ENCODE measurements at regions of chr3 and their contacts with region 1.

Region 1: GRCh38 chr3:32684800-32685542 is at the start of gene CNOT10:
- DNase-seq: peak; percentile 97
- H3K4me3 Mint-ChIP-seq: peak within 1 kb of the TSS; percentile 90
- H3K27ac Mint-ChIP-seq: peak within 1 kb of the TSS; percentile 86
- H3K4me1 Mint-ChIP-seq: peaks cover 32% of the 10 kb centered on the region
- H3K27me3 Mint-ChIP-seq: no peaks in the 10 kb centered on the region
- total RNA-seq, gene CNOT10: 40.6 to 46.5 TPM

Region 2: GRCh38 chr3:32106280-32106928 is 578.6 kb before region 1 on chr3 and contains the start of gene GPD1L:
- CTCF ChIA-PET with region 1: no interaction called
- intact Hi-C with region 1: loop called (anchors 1 kb)
- DNase-seq: peak; percentile 92
- H3K4me3 Mint-ChIP-seq: peak within 1 kb of the TSS; percentile 96
- H3K27ac Mint-ChIP-seq: peak within 1 kb of the TSS; percentile 46
- H3K4me1 Mint-ChIP-seq: peaks cover 30% of the 10 kb centered on the region
- H3K27me3 Mint-ChIP-seq: no peaks in the 10 kb centered on the region
- total RNA-seq, gene GPD1L: 10.8 to 12.6 TPM

Region 3: GRCh38 chr3:32502118-32502945 is 182.6 kb before region 1 on chr3 and contains the start of gene CMTM6:
- CTCF ChIA-PET with region 1: no interaction called
- intact Hi-C with region 1: loop called (anchors 1 kb)
- DNase-seq: peak; percentile 81
- H3K4me3 Mint-ChIP-seq: peak within 1 kb of the TSS; percentile 97
- H3K27ac Mint-ChIP-seq: peak within 1 kb of the TSS; percentile 89
- H3K4me1 Mint-ChIP-seq: peaks cover 27% of the 10 kb centered on the region
- H3K27me3 Mint-ChIP-seq: no peaks in the 10 kb centered on the region
- total RNA-seq, gene CMTM6: 43.7 to 44.3 TPM

Region 4: GRCh38 chr3:32781210-32781968 is 96.4 kb after region 1 on chr3:
- CTCF ChIA-PET with region 1: interaction called, 4 read pairs
- intact Hi-C with region 1: loop called (anchors 1 kb)
- DNase-seq: peak; percentile 74
- H3K4me3 Mint-ChIP-seq: peak overlapping the region; percentile 77
- H3K27ac Mint-ChIP-seq: no peak overlapping the region
- H3K4me1 Mint-ChIP-seq: peaks cover 2% of the 10 kb centered on the region
- H3K27me3 Mint-ChIP-seq: peaks cover 18% of the 10 kb centered on the region

Region 5: DNA sequence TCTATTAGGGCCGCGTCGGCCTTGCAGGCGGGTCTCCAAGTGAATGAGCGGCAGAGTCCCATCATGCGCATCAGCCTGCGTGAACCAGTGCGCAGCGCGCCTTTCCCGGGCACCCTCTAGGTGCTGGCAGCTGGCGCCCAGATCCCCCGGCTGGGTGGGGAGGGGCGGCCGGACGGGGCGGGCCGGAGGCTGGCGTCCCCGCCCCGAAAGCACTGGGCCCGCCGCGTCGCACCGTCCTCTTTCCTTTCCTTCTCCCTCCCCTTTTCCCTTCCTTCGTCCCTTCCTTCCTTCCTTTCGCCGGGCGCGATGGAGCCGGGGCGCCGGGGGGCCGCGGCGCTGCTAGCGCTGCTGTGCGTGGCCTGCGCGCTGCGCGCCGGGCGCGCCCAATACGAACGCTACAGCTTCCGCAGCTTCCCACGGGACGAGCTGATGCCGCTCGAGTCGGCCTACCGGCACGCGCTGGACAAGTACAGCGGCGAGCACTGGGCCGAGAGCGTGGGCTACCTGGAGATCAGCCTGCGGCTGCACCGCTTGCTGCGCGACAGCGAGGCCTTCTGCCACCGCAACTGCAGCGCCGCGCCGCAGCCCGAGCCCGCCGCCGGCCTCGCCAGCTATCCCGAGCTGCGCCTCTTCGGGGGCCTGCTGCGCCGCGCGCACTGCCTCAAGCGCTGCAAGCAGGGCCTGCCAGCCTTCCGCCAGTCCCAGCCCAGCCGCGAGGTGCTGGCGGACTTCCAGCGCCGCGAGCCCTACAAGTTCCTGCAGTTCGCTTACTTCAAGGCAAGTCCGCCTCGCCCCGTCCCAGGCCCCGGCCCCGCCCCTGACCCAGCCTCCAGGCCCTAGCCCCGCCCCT is 429.0 kb after region 1 on chr3 and contains the start of gene CRTAP:
- CTCF ChIA-PET with region 1: no interaction called
- intact Hi-C with region 1: loop called (anchors 5 kb)
- DNase-seq: peak; percentile 86
- H3K4me3 Mint-ChIP-seq: peak within 1 kb of the TSS; percentile 78
- H3K27ac Mint-ChIP-seq: no peak within 1 kb of the TSS
- H3K4me1 Mint-ChIP-seq: peaks cover 36% of the 10 kb centered on the region
- H3K27me3 Mint-ChIP-seq: no peaks in the 10 kb centered on the region
- total RNA-seq, gene CRTAP: 48.1 to 51.1 TPM